Activated B cell treated with CpG ODN at 0.5 μM for 24 hours (primary cell): ENCODE measurements at regions of chr19 and their contacts with region 1.

Region 1: GRCh38 chr19:38831142-38831605 is 420 bp downstream of the ECH1 start:
- DNase-seq: no peak
- ATAC-seq: peak; percentile 42
- H3K4me3 Mint-ChIP-seq: peak overlapping the region; percentile 94
- H3K27ac Mint-ChIP-seq: peak overlapping the region; percentile 95
- H3K4me1 Mint-ChIP-seq: peaks cover 31% of the 10 kb centered on the region
- H3K27me3 Mint-ChIP-seq: no peaks in the 10 kb centered on the region
- CTCF ChIP-seq: no peak

Region 2: DNA sequence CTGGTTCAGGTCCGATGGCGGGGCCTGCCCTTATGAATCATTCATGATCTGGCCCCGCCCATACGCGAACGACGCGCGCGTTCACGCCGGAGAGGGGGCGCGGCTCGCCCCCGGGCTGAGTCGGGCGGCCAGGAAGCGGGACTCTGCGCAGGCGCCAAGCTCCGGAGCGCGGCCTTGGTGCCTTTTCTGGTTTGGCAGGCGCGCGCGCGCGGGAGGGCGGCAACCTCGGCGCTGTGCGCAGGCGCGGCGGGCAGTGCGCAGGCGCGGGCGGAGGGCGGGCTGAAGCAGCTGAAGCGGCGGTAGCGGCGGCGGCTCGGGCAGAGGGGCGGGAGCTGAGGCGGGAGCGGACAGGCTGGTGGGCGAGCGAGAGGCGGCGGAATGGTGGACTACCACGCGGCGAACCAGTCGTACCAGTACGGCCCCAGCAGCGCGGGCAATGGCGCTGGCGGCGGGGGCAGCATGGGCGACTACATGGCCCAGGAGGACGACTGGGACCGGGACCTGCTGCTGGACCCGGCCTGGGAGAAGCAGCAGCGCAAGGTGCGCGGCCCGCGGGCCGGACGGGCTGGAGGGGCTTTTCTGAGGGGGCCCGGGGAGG is 183.7 kb before region 1 on chr19 and contains the start of gene ACTN4:
- CTCF ChIA-PET with region 1: no interaction called
- POLR2A ChIA-PET with region 1: interaction called, 4 read pairs
- intact Hi-C with region 1: loop called (anchors 1 kb)
- DNase-seq: peak; percentile 100
- ATAC-seq: peak; percentile 91
- H3K4me3 Mint-ChIP-seq: peak within 1 kb of the TSS; percentile 95
- H3K27ac Mint-ChIP-seq: peak within 1 kb of the TSS; percentile 82
- H3K4me1 Mint-ChIP-seq: peaks cover 42% of the 10 kb centered on the region
- H3K27me3 Mint-ChIP-seq: no peaks in the 10 kb centered on the region
- CTCF ChIP-seq: no peak
- total RNA-seq, gene ACTN4: 197 and 198 TPM in 2 replicates

Region 3: GRCh38 chr19:38769635-38770211 is 61.5 kb before region 1 on chr19:
- CTCF ChIA-PET with region 1: interaction called, 8 read pairs
- POLR2A ChIA-PET with region 1: interaction called, 30 read pairs
- intact Hi-C with region 1: loop called (anchors 2 kb)
- DNase-seq: peak; percentile 94
- ATAC-seq: peak; percentile 89
- H3K4me3 Mint-ChIP-seq: peak overlapping the region; percentile 68
- H3K27ac Mint-ChIP-seq: peak overlapping the region; percentile 78
- H3K4me1 Mint-ChIP-seq: peaks cover 11% of the 10 kb centered on the region
- H3K27me3 Mint-ChIP-seq: no peaks in the 10 kb centered on the region
- CTCF ChIP-seq: peak; percentile 59

Region 4: DNA sequence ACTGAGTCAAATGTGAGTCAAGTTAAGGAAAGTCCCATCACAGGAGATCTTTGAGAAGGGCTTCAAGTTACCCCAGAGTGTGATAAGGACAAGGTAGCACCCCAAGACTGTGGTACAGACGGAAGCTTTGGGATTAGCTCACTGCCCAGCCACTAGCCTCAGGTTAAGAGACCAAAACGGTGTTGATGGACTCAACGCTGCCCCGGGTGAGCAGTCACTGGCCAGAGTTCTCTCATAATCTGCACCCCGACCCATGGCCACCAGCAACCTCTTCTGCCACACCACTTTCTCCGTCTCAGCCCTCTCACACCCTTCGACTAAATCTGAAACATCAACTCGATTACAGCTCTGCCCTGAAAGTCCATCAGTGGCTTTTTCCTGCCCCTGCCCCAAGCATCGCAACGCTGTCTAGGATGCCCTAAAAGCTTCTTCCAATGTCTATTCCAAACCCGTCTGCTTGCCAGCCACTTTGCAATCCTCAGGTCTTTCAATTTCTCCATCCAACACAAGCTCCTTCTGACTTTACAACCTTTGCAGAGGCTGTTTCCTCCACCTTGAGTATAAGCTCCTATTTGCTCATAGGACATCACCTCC is 13.0 kb after region 1 on chr19:
- CTCF ChIA-PET with region 1: interaction called, 3 read pairs
- POLR2A ChIA-PET with region 1: interaction called, 118 read pairs
- intact Hi-C with region 1: loop called (anchors 1 kb)
- DNase-seq: no peak
- ATAC-seq: no peak
- H3K4me3 Mint-ChIP-seq: no peak overlapping the region
- H3K27ac Mint-ChIP-seq: peak overlapping the region; percentile 46
- H3K4me1 Mint-ChIP-seq: peaks cover 68% of the 10 kb centered on the region
- H3K27me3 Mint-ChIP-seq: no peaks in the 10 kb centered on the region
- CTCF ChIP-seq: no peak

Region 5: DNA sequence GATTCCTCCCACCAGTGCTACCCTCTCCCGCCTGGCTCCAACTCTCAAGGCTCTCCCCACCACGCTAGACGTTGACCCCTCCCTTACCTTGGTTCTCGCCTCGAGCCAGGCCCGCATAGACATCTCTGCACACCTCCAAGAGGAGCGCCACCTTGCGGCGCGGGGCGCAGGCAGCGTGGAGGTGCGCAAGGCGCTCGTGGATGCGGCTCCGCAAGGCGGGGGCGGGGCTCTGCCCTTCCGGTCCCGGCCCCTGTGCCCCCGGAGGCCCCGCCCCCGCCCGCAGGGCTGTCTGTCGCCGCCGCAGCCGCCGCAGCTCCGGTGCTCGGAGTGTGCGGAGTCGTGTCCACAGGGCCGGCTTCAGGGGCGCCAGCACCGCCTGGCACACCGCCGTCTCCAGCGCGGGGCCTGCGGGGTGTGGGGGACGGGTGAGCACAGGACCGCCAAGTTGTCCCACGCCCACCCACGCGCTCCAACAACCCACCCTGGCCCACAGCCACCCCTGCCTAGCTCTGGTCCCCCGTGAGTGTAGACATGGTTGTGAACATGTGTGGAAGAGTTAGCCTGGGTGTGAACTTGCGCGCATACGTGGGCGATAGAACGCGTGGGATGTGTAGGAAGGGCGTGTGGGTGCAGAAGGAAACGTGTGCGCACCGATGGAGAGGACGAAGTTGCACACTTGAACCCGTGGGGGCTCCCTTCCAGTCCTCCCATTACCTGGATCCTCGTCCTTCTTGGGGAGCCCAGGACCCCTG is 38.9 kb after region 1 on chr19:
- CTCF ChIA-PET with region 1: interaction called, 5 read pairs
- POLR2A ChIA-PET with region 1: interaction called, 38 read pairs
- intact Hi-C with region 1: loop called (anchors 1 kb)
- DNase-seq: peak; percentile 94
- ATAC-seq: peak; percentile 87
- H3K4me3 Mint-ChIP-seq: peak overlapping the region; percentile 92
- H3K27ac Mint-ChIP-seq: peak overlapping the region; percentile 91
- H3K4me1 Mint-ChIP-seq: peaks cover 57% of the 10 kb centered on the region
- H3K27me3 Mint-ChIP-seq: no peaks in the 10 kb centered on the region
- CTCF ChIP-seq: no peak

Region 6: GRCh38 chr19:38891771-38892170 is 60.6 kb after region 1 on chr19:
- CTCF ChIA-PET with region 1: interaction called, 12 read pairs
- POLR2A ChIA-PET with region 1: interaction called, 9 read pairs
- intact Hi-C with region 1: loop called (anchors 1 kb)
- DNase-seq: no peak
- ATAC-seq: no peak
- H3K4me3 Mint-ChIP-seq: no peak overlapping the region
- H3K27ac Mint-ChIP-seq: no peak overlapping the region
- H3K4me1 Mint-ChIP-seq: peaks cover 1% of the 10 kb centered on the region
- H3K27me3 Mint-ChIP-seq: no peaks in the 10 kb centered on the region
- CTCF ChIP-seq: no peak